ENCODE measurements at regions of chr14 and their contacts with region 1.

Region 1: GRCh38 chr14:50532502-50533240 is at the start of gene MAP4K5:
- DNase-seq: peak; percentile 90 to 95 (median 95)
- ATAC-seq: peak; percentile 96
- H3K4me3 ChIP-seq: peak within 1 kb of the TSS; percentile 89
- H3K4me1 ChIP-seq: peaks cover 23% of the 10 kb centered on the region
- CTCF ChIP-seq: peak; percentile 69
- total RNA-seq, gene MAP4K5: 42.2 to 65.8 (median 45.3) TPM

Region 2: DNA sequence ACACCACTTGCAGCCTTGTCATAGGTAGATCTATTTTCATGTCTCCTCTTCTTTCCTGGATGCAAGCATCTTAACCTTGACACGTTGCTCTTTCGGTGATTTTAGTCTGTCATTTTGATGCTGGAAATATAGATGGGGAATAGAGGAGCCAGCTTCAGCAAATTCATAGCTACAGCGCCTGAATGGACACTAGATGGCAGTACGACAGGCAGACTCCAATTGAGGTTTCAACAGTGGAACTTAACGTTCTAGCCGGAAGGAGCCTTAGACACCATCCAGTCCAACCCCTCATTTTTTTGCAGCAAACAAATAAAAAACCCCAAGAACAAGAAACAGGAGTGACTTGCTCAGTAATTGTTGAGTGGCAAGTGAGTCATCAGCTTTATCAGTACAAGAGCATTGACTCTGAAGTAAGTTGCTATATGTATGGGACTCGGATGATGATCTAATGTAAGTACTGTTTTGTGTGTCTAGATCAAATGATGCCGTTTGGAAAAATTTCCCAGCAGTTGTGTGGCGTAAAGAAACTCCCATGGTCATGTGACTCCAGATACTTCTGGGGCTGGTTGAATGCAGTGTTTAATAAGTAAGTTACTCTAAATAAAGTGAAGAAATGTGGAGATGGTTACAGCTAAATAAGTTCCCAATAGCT is 211.5 kb before region 1 on chr14:
- intact Hi-C with region 1: loop called (anchors 2 to 5 kb)
- DNase-seq: peak in 1 of 3 donors; percentile 79
- ATAC-seq: peak; percentile 99
- H3K4me3 ChIP-seq: no peak overlapping the region
- H3K4me1 ChIP-seq: peaks cover 5% of the 10 kb centered on the region
- CTCF ChIP-seq: peak; percentile 78

Measured in mucosa of descending colon (tissue), 3 donors.